ENCODE measurements at regions of chr9 and their contacts with region 1.

Region 1: GRCh38 chr9:120755827-120756434 is 37.3 kb downstream of the FBXW2 start:
- DNase-seq: peak; percentile 74
- H3K4me3 Mint-ChIP-seq: no peak overlapping the region
- H3K27ac Mint-ChIP-seq: no peak overlapping the region
- H3K4me1 Mint-ChIP-seq: peaks cover 6% of the 10 kb centered on the region
- H3K27me3 Mint-ChIP-seq: no peaks in the 10 kb centered on the region

Region 2: GRCh38 chr9:120571443-120572257 is 184.3 kb before region 1 on chr9:
- CTCF ChIA-PET with region 1: no interaction called
- DNase-seq: no peak
- H3K4me3 Mint-ChIP-seq: no peak overlapping the region
- H3K27ac Mint-ChIP-seq: no peak overlapping the region
- H3K4me1 Mint-ChIP-seq: peaks cover 9% of the 10 kb centered on the region
- H3K27me3 Mint-ChIP-seq: no peaks in the 10 kb centered on the region

Region 3: GRCh38 chr9:120767456-120768167 is 11.7 kb after region 1 on chr9:
- CTCF ChIA-PET with region 1: interaction called, 12 read pairs
- DNase-seq: no peak
- H3K4me3 Mint-ChIP-seq: no peak overlapping the region
- H3K27ac Mint-ChIP-seq: no peak overlapping the region
- H3K4me1 Mint-ChIP-seq: peaks cover 36% of the 10 kb centered on the region
- H3K27me3 Mint-ChIP-seq: no peaks in the 10 kb centered on the region

Region 4: DNA sequence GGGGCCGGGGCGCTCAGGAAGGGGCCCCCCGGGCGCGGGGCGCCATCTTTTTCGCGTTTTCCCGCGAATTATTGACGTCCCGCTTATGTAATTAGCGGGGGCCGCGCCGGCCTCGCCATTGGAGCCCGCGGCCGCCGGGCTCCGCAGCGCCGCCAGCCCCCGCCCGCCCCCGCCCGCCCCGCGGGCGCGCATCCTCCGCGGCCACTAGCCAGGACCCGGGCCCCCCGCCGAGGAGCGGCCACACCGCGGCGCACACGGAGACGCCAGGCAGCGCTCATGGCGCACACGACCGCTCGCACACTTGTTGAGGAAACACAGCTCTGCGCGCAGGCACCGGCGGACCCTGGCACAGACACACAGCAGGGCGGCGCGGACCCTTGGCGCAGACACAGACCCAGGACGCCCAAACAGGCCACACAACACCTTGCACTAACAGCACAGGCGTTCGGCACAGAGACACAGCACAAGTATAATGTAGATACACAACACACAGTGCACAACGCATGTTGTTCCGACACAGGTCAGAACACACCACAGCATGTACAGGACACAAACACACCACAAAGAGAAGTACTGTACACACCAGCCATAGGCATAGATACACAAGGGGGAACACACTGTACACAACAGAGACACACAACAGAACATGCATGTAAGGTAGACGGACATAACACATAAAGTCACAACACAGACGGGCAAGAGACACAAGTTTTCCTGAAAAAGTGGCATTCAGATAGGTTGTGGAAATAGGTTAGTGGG is 121.5 kb after region 1 on chr9:
- CTCF ChIA-PET with region 1: interaction called, 12 read pairs
- DNase-seq: peak; percentile 77
- H3K4me3 Mint-ChIP-seq: peak overlapping the region; percentile 82
- H3K27ac Mint-ChIP-seq: peak overlapping the region; percentile 95
- H3K4me1 Mint-ChIP-seq: peaks cover 82% of the 10 kb centered on the region
- H3K27me3 Mint-ChIP-seq: no peaks in the 10 kb centered on the region

Region 5: GRCh38 chr9:120936011-120936763 is 180.3 kb after region 1 on chr9:
- CTCF ChIA-PET with region 1: interaction called, 17 read pairs
- DNase-seq: peak; percentile 91
- H3K4me3 Mint-ChIP-seq: peak overlapping the region; percentile 56
- H3K27ac Mint-ChIP-seq: peak overlapping the region; percentile 92
- H3K4me1 Mint-ChIP-seq: peaks cover 64% of the 10 kb centered on the region
- H3K27me3 Mint-ChIP-seq: peaks cover 6% of the 10 kb centered on the region

Region 6: GRCh38 chr9:120985810-120986222 is 229.9 kb after region 1 on chr9:
- CTCF ChIA-PET with region 1: interaction called, 11 read pairs
- DNase-seq: no peak
- H3K4me3 Mint-ChIP-seq: no peak overlapping the region
- H3K27ac Mint-ChIP-seq: no peak overlapping the region
- H3K4me1 Mint-ChIP-seq: no peaks in the 10 kb centered on the region
- H3K27me3 Mint-ChIP-seq: peaks cover 8% of the 10 kb centered on the region

Region 7: GRCh38 chr9:121059998-121060636 is 304.2 kb after region 1 on chr9:
- CTCF ChIA-PET with region 1: interaction called, 45 read pairs
- DNase-seq: peak; percentile 35
- H3K4me3 Mint-ChIP-seq: no peak overlapping the region
- H3K27ac Mint-ChIP-seq: no peak overlapping the region
- H3K4me1 Mint-ChIP-seq: peaks cover 13% of the 10 kb centered on the region
- H3K27me3 Mint-ChIP-seq: no peaks in the 10 kb centered on the region

Region 8: DNA sequence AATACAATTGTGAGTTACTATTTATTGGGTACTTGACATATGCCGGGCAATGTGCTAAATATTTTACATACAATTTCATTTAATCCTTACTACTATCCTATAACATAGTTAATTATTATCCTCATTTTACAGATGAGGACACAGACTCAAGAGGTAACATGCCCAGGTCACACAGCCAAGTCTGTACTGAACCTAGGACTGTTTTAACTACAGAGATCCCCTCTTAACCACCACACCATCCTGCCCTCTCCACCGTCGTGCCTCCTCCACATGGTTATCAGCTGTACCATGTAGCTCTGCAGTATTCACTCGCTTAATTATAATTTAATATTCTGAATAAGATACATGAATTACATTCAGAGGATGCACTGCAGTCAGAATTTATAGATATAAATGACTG is 440.5 kb after region 1 on chr9:
- CTCF ChIA-PET with region 1: no interaction called
- DNase-seq: no peak
- H3K4me3 Mint-ChIP-seq: no peak overlapping the region
- H3K27ac Mint-ChIP-seq: no peak overlapping the region
- H3K4me1 Mint-ChIP-seq: peaks cover 69% of the 10 kb centered on the region
- H3K27me3 Mint-ChIP-seq: no peaks in the 10 kb centered on the region